CD4-positive, alpha-beta memory T cell (primary cell): ENCODE measurements at regions of chr10 and their contacts with region 1.

Region 1: GRCh38 chr10:35119378-35119777 is 7.3 kb upstream of the CREM start:
- DNase-seq: no peak
- H3K4me3 ChIP-seq: no peak overlapping the region
- H3K4me3 Mint-ChIP-seq: no peak overlapping the region
- H3K27ac ChIP-seq: no peak overlapping the region
- H3K27ac Mint-ChIP-seq: no peak overlapping the region
- H3K4me1 ChIP-seq: no peaks in the 10 kb centered on the region
- H3K4me1 Mint-ChIP-seq: peaks cover 0 to 2% (median under 1%) of the 10 kb centered on the region in 4 donors
- H3K27me3 ChIP-seq: no peaks in the 10 kb centered on the region
- H3K27me3 Mint-ChIP-seq: no peaks in the 10 kb centered on the region

Region 2: GRCh38 chr10:35208536-35208935 is 89.2 kb after region 1 on chr10:
- CTCF ChIA-PET with region 1: interaction called, 377 read pairs
- POLR2A ChIA-PET with region 1: interaction called, 3 read pairs
- intact Hi-C with region 1: no loop called
- DNase-seq: peak; percentile 10 to 56 (median 24)
- H3K4me3 ChIP-seq: peak overlapping the region in 1 of 2 donors; percentile 20
- H3K4me3 Mint-ChIP-seq: peak overlapping the region; percentile 23 to 79 (median 74)
- H3K27ac ChIP-seq: peak overlapping the region; percentile 47
- H3K27ac Mint-ChIP-seq: peak overlapping the region; percentile 73 to 97 (median 93)
- H3K4me1 ChIP-seq: peaks cover 12% of the 10 kb centered on the region
- H3K4me1 Mint-ChIP-seq: peaks cover 12 to 24% (median 15%) of the 10 kb centered on the region in 4 donors
- H3K27me3 ChIP-seq: no peaks in the 10 kb centered on the region
- H3K27me3 Mint-ChIP-seq: no peaks in the 10 kb centered on the region

Region 3: DNA sequence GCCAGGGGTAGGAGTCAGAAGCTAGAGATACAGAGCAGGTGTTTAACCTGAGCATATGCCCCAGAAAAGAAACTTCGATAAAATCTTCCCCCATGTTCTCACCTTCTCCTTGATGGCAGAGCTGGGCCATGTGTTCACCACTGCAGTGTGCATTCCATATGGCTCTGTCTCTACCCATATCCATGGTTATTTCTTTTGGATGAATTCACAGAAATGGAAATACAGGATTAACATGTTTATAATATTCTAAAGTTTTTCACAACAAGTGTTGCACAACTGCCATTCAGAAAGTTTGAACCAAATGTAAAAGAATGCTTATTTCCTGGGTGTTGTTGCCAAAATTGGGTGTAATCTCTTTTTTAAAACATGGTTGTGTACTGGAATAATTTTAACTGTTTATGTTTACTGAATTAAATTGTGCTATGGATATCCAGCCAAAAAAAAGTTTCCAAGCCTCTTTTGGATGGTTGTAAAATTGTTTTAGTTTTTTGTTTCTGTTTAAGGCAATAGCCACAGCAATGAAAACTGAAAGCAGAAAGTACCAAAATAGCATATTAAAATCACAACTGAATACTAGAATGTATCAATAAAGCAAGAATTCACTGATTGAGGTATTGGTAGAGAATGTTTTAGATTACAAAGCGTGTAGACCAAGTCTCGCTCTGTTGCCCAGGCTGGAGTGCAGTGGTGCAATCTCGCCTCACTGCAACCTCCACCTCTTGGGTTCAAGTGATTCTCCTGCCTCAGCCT is 197.0 kb after region 1 on chr10:
- CTCF ChIA-PET with region 1: no interaction called
- POLR2A ChIA-PET with region 1: no interaction called
- intact Hi-C with region 1: no loop called
- DNase-seq: no peak
- H3K4me3 ChIP-seq: no peak overlapping the region
- H3K4me3 Mint-ChIP-seq: no peak overlapping the region
- H3K27ac ChIP-seq: no peak overlapping the region
- H3K27ac Mint-ChIP-seq: peak overlapping the region in 1 of 7 donors; percentile 80
- H3K4me1 ChIP-seq: no peaks in the 10 kb centered on the region
- H3K4me1 Mint-ChIP-seq: peaks cover 0 to 6% (median 3%) of the 10 kb centered on the region in 4 donors
- H3K27me3 ChIP-seq: no peaks in the 10 kb centered on the region
- H3K27me3 Mint-ChIP-seq: no peaks in the 10 kb centered on the region